Panc1 (cell line): ENCODE measurements at regions of chr4 and their contacts with region 1.

Region 1: GRCh38 chr4:138870737-138871554 is 144.6 kb upstream of the NOCT start:
- DNase-seq: peak; percentile 50
- ATAC-seq: peak; percentile 86
- H3K4me3 ChIP-seq: no peak overlapping the region
- H3K27ac ChIP-seq: no peak overlapping the region
- H3K4me1 ChIP-seq: no peaks in the 10 kb centered on the region
- H3K27me3 ChIP-seq: no peaks in the 10 kb centered on the region; the same call in 1 of the 2 replicates
- CTCF ChIP-seq: peak; percentile 78

Region 2: GRCh38 chr4:138182838-138183426 is 688.0 kb before region 1 on chr4:
- CTCF ChIA-PET with region 1: no interaction called
- POLR2A ChIA-PET with region 1: no interaction called
- in situ Hi-C with region 1: no loop called
- intact Hi-C with region 1: loop called (anchors 10 kb)
- DNase-seq: no peak
- ATAC-seq: no peak
- H3K4me3 ChIP-seq: no peak overlapping the region
- H3K27ac ChIP-seq: no peak overlapping the region
- H3K4me1 ChIP-seq: no peaks in the 10 kb centered on the region
- H3K27me3 ChIP-seq: no peaks in the 10 kb centered on the region
- CTCF ChIP-seq: peak; percentile 54